A673 (cell line): ENCODE measurements at regions of chr9 and their contacts with region 1.

Region 1: GRCh38 chr9:13088720-13089427 is 190.6 kb downstream of the MPDZ start:
- DNase-seq: peak; percentile 76
- H3K4me3 ChIP-seq: no peak overlapping the region
- H3K27ac ChIP-seq: no peak overlapping the region
- H3K4me1 ChIP-seq: no peaks in the 10 kb centered on the region
- H3K27me3 ChIP-seq: no peaks in the 10 kb centered on the region
- CTCF ChIP-seq: peak; percentile 73

Region 2: DNA sequence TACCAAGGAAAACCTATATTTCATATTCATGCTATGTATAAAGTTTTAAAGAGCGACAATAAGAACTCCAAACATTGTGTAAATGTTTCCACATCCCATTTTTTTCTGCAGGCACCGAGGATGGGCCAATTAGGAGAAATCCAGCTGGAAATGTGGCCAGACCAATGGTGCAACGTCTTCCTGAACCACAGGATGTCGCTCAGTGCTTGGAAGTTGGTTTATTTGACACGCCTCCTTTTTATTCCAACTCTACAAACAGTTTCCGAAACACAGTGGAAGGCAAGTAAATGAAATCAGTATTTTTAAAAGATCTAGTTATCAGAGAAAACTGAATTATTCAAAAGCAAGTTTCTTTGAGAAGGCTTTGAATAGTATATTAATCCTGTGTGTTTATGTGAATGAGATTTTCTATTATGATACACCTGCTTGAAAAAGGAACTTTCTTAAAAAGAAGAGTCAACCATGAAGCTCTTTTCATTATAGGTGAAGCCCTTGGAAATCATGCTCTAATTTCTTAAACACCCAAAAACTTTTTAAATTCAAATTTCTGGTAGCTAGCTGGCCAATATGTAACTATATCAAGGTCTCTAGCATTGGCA is 386.6 kb before region 1 on chr9:
- CTCF ChIA-PET with region 1: interaction called, 3 read pairs
- POLR2A ChIA-PET with region 1: no interaction called
- intact Hi-C with region 1: loop called (anchors 5 kb)
- DNase-seq: peak; percentile 66
- H3K4me3 ChIP-seq: no peak overlapping the region
- H3K27ac ChIP-seq: no peak overlapping the region
- H3K4me1 ChIP-seq: peaks cover 17% of the 10 kb centered on the region
- H3K27me3 ChIP-seq: no peaks in the 10 kb centered on the region
- CTCF ChIP-seq: peak; percentile 76

Region 3: GRCh38 chr9:12775679-12776512 is 313.0 kb before region 1 on chr9:
- CTCF ChIA-PET with region 1: interaction called, 3 read pairs
- POLR2A ChIA-PET with region 1: no interaction called
- intact Hi-C with region 1: loop called (anchors 5 kb)
- DNase-seq: peak; percentile 82
- H3K4me3 ChIP-seq: peak overlapping the region; percentile 60
- H3K27ac ChIP-seq: no peak overlapping the region
- H3K4me1 ChIP-seq: peaks cover 5% of the 10 kb centered on the region
- H3K27me3 ChIP-seq: peaks cover 6% of the 10 kb centered on the region
- CTCF ChIP-seq: peak; percentile 50

Region 4: DNA sequence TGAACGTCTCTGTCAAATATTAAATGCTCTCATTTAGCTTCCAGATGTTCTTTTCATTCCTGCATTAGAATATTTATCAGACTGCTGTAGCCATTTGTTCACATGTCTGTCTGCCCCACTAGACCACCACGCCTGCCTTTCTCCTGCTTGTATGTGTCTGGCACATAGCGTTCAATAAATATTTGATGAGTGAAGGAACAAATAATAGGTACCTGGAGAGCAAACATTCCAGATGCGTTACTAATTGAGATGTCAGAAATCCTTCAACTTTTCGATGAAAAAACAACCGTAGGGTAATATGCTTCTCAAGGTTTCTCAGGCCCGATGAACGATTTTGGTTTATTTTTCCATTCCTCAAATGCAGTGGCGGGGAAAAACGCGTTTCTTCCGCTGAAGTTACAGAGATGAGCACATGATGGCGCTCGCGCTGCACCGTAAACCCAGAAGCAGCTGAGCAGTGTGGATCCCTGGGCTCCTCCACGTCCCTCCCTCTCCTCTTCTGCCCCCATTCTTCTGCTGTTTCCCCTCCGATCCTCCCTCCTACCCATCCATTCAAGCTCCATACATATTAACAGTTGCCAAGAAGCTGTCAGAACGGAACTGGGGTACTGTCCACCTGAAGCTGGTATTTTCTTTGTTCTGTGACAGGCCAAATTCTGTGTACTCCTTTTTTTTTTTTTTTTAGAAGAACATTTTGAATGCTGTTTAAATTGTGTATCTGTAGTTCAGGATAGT is 54.7 kb before region 1 on chr9:
- CTCF ChIA-PET with region 1: interaction called, 6 read pairs
- POLR2A ChIA-PET with region 1: no interaction called
- intact Hi-C with region 1: loop called (anchors 2 kb)
- DNase-seq: peak; percentile 80
- H3K4me3 ChIP-seq: peak overlapping the region; percentile 17
- H3K27ac ChIP-seq: no peak overlapping the region
- H3K4me1 ChIP-seq: no peaks in the 10 kb centered on the region
- H3K27me3 ChIP-seq: no peaks in the 10 kb centered on the region
- CTCF ChIP-seq: peak; percentile 82

Region 5: DNA sequence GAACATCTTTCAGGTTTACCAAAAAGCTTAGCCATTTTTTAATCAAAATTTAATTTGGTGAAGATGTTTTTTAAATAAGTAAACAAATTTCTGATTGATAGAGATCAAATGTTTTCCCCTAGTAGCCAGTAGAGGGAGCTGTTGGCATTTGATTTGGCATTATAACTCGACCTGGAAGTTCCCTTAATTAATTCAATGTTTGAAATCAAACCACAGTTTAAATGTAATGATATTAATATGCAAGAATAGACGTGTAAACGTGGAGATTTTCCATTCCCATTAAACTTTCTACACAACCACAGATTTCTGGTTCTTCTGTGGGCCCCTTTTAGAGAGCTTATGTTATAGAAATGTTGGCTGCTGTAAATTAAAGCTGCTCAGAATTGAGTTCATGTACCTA is 338.7 kb after region 1 on chr9:
- CTCF ChIA-PET with region 1: no interaction called
- POLR2A ChIA-PET with region 1: no interaction called
- intact Hi-C with region 1: no loop called
- DNase-seq: peak; percentile 60
- H3K4me3 ChIP-seq: no peak overlapping the region
- H3K27ac ChIP-seq: no peak overlapping the region
- H3K4me1 ChIP-seq: peaks cover 23% of the 10 kb centered on the region
- H3K27me3 ChIP-seq: no peaks in the 10 kb centered on the region
- CTCF ChIP-seq: peak; percentile 77

Region 6: DNA sequence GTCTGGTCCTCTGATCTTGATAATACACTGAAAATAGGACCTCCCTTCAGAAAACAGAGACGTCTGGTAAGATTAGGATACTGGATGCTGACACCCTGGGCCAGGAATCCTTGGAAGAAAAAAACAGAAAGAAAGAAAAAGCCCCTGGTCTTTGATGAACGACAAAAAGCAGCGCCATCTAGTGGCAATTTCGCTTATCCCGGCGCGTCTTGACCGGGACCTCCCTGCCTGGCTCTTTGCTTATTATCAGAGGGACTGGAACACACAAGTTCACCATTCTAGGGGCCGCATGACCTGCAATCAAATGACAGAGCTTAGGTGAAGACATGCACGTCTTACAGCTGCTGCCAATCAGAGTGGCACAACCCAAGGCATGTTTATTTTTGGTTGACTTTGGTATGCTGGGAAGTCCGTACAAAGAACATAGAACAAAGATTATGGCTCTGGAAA is 1339.9 kb after region 1 on chr9:
- CTCF ChIA-PET with region 1: no interaction called
- POLR2A ChIA-PET with region 1: no interaction called
- intact Hi-C with region 1: loop called (anchors 5 kb)
- DNase-seq: peak; percentile 77
- H3K4me3 ChIP-seq: no peak overlapping the region
- H3K27ac ChIP-seq: no peak overlapping the region
- H3K4me1 ChIP-seq: peaks cover 6% of the 10 kb centered on the region
- H3K27me3 ChIP-seq: no peaks in the 10 kb centered on the region
- CTCF ChIP-seq: peak; percentile 65